B cell (primary cell): ENCODE measurements at regions of chr17 and their contacts with region 1.

Region 1: GRCh38 chr17:29140051-29140621 is 40.1 kb downstream of the MYO18A start:
- DNase-seq: peak; percentile 66
- ATAC-seq: peak; percentile 60
- H3K4me3 ChIP-seq: peak overlapping the region; percentile 53 to 83 (median 75)
- H3K4me3 Mint-ChIP-seq: peak overlapping the region; percentile 91
- H3K27ac ChIP-seq: peak overlapping the region; percentile 42 to 81
- H3K27ac Mint-ChIP-seq: peak overlapping the region; percentile 98
- H3K4me1 ChIP-seq: peaks cover 42 to 60% of the 10 kb centered on the region in 2 donors
- H3K4me1 Mint-ChIP-seq: peaks cover 68% of the 10 kb centered on the region
- H3K27me3 ChIP-seq: no peaks in the 10 kb centered on the region
- H3K27me3 Mint-ChIP-seq: no peaks in the 10 kb centered on the region
- CTCF ChIP-seq: no peak

Region 2: GRCh38 chr17:29102741-29103181 is 37.4 kb before region 1 on chr17:
- CTCF ChIA-PET with region 1: no interaction called
- POLR2A ChIA-PET with region 1: no interaction called
- intact Hi-C with region 1: no loop called
- DNase-seq: no peak
- ATAC-seq: no peak
- H3K4me3 ChIP-seq: no peak overlapping the region
- H3K4me3 Mint-ChIP-seq: no peak overlapping the region
- H3K27ac ChIP-seq: no peak overlapping the region
- H3K27ac Mint-ChIP-seq: no peak overlapping the region
- H3K4me1 ChIP-seq: no peaks in the 10 kb centered on the region
- H3K4me1 Mint-ChIP-seq: no peaks in the 10 kb centered on the region
- H3K27me3 ChIP-seq: no peaks in the 10 kb centered on the region
- H3K27me3 Mint-ChIP-seq: no peaks in the 10 kb centered on the region
- CTCF ChIP-seq: no peak

Region 3: DNA sequence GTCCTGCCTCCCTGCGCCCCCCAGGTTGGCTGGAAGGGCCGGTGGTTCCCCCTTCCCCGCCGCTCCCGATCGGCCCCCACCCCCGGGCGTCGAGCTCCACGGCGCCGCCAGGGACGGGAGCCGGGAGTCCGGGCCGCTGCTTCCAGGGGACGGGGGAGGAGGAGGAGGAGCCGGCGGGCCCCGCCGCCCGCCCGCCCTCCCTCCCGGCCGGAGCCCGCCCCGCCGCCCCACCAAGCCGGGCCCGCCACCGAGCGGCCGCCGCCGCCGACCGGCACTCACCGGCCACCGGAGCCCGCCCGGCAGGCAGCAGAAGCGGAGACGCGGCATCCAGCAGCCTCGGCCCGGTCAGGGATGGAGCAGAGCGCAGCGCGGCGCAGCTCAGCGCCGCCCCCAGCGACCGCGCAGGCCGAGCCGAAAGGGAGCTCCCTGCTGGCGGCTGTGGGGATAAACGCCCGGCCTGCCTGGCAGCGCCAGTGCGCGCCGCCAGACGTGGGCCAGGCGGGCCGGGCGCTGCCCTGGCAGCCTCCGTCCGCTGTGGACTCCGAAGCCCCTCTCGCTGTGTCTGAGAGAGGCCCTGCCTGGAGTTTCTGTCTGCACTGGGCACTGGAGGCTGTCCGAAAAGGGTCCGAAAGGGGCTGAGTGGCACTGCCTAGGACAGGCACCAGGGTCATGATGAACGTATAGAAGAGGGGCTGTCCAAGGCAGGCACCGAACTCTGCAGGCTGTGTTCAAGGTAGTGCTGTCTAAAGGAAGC is 40.1 kb after region 1 on chr17 and contains the start of gene MYO18A:
- CTCF ChIA-PET with region 1: interaction called, 225 read pairs
- POLR2A ChIA-PET with region 1: interaction called, 6 read pairs
- intact Hi-C with region 1: loop called (anchors 1 kb)
- DNase-seq: peak; percentile 87
- ATAC-seq: peak; percentile 97
- H3K4me3 ChIP-seq: peak within 1 kb of the TSS in 3 of 5 experiments; percentile 33 to 46 (median 44)
- H3K4me3 Mint-ChIP-seq: peak within 1 kb of the TSS; percentile 69
- H3K27ac ChIP-seq: no peak within 1 kb of the TSS
- H3K27ac Mint-ChIP-seq: no peak within 1 kb of the TSS
- H3K4me1 ChIP-seq: peaks cover 9 to 28% of the 10 kb centered on the region in 2 donors
- H3K4me1 Mint-ChIP-seq: peaks cover 16% of the 10 kb centered on the region
- H3K27me3 ChIP-seq: peaks cover 0 to 2% (median 0%) of the 10 kb centered on the region in 4 experiments
- H3K27me3 Mint-ChIP-seq: peaks cover 7% of the 10 kb centered on the region
- CTCF ChIP-seq: peak; percentile 81
- total RNA-seq, gene MYO18A: 155 and 169 TPM in 2 replicates

Region 4: DNA sequence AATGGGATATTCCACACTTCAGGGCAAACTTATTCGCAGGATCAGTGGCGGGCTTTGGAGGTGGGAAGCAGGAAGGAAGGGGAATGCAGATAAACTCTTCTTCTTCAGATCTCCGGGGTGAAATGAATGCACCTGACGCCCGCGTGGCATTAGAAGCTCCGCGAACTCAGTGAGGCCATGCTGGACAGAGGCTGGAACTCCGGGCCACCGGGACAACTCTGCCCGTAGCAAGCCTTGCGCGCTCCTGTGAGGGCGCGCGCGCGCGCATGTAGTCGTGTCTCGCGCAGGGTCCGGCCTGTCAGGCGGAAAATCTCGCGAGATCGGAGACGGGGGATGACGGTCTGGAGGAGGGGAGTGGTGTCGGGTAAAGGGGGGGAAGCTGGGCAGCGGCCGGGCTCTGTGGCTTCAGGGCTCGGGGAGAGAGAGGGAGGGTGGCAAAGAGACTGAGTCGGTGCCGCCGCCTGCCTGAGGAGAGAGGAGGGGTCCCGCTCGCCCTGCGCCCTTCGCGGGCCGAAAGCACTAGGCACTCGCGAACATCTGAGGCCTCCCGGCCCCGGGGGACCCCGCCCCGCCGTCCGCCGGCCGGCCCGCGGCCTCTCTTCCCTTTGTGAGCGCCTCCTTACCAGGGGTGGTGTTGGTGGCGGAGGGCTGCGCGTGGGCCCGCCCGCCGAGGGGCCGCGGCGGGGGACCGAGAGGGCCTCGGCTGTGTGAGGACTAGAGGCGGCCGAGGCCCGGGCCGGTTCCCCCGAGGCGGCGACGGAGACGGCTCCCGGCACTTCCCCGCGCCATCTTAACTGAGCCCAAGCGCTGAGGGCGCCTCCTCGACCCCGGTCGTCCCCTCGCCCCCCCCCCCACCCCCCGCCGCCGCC is 250.1 kb after region 1 on chr17 and contains the start of gene TAOK1:
- CTCF ChIA-PET with region 1: no interaction called
- POLR2A ChIA-PET with region 1: interaction called, 3 read pairs
- intact Hi-C with region 1: loop called (anchors 2 kb)
- DNase-seq: peak; percentile 98
- ATAC-seq: peak; percentile 95
- H3K4me3 ChIP-seq: peak within 1 kb of the TSS; percentile 65 to 93 (median 76)
- H3K4me3 Mint-ChIP-seq: peak within 1 kb of the TSS; percentile 95
- H3K27ac ChIP-seq: peak within 1 kb of the TSS; percentile 64 to 96
- H3K27ac Mint-ChIP-seq: peak within 1 kb of the TSS; percentile 93
- H3K4me1 ChIP-seq: peaks cover 12 to 27% of the 10 kb centered on the region in 2 donors
- H3K4me1 Mint-ChIP-seq: peaks cover 38% of the 10 kb centered on the region
- H3K27me3 ChIP-seq: no peaks in the 10 kb centered on the region
- H3K27me3 Mint-ChIP-seq: no peaks in the 10 kb centered on the region
- CTCF ChIP-seq: no peak
- total RNA-seq, gene TAOK1: 78.8 and 80.7 TPM in 2 replicates